Activated CD4-positive, alpha-beta T cell treated with anti-CD3 and anti-CD28 coated beads for 36 hours (primary cell): ENCODE measurements at regions of chr16 and their contacts with region 1.

Region 1: GRCh38 chr16:8963825-8964441 is at the start of gene USP7:
- DNase-seq: peak; percentile 97
- ATAC-seq: peak; percentile 91
- H3K4me3 Mint-ChIP-seq: peak within 1 kb of the TSS; percentile 95
- H3K27ac Mint-ChIP-seq: peak within 1 kb of the TSS; percentile 94
- H3K4me1 Mint-ChIP-seq: peaks cover 34% of the 10 kb centered on the region
- H3K27me3 Mint-ChIP-seq: peaks cover 2% of the 10 kb centered on the region
- total RNA-seq, gene USP7: 165 to 198 TPM

Region 2: GRCh38 chr16:8674413-8675022 is 289.4 kb before region 1 on chr16 and contains the start of gene ABAT:
- CTCF ChIA-PET with region 1: no interaction called
- POLR2A ChIA-PET with region 1: no interaction called
- intact Hi-C with region 1: loop called in 1 of 2 experiments (anchors 2 kb)
- DNase-seq: peak; percentile 93
- ATAC-seq: peak; percentile 96
- H3K4me3 Mint-ChIP-seq: peak within 1 kb of the TSS; percentile 83
- H3K27ac Mint-ChIP-seq: peak within 1 kb of the TSS; percentile 92
- H3K4me1 Mint-ChIP-seq: peaks cover 18% of the 10 kb centered on the region
- H3K27me3 Mint-ChIP-seq: no peaks in the 10 kb centered on the region
- total RNA-seq, gene ABAT: 5.4 to 6.0 TPM

Region 3: GRCh38 chr16:8928467-8928957 is 35.4 kb before region 1 on chr16:
- CTCF ChIA-PET with region 1: no interaction called
- POLR2A ChIA-PET with region 1: no interaction called
- intact Hi-C with region 1: loop called in 1 of 2 experiments (anchors 5 kb)
- DNase-seq: peak; percentile 66
- ATAC-seq: peak; percentile 84
- H3K4me3 Mint-ChIP-seq: no peak overlapping the region
- H3K27ac Mint-ChIP-seq: peak overlapping the region; percentile 61
- H3K4me1 Mint-ChIP-seq: peaks cover 62% of the 10 kb centered on the region
- H3K27me3 Mint-ChIP-seq: no peaks in the 10 kb centered on the region

Region 4: DNA sequence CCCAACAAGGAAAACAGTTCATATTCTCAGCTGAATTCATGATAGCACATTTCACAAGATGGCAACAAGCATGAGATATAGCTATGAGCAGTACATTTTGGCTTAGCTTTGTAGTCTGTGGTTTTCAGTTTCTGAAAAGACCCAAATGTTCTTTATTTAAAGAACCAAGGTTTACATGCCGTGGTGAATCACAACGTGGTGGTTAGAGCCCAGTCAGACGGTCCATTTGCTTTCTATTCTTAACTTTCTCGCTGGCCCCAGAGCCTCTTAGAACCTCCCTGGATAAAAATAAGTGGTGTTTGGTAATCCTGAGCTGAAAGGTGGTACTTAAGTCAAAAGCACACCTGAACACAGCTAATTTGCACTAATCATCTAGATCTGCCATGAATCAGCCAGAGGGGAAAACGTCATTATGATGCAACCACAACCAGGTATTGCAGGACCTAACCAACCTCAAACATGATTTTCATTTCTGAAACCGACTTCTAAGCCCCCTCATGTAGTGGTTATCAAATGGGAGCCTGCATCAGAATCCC is 108.9 kb after region 1 on chr16:
- CTCF ChIA-PET with region 1: no interaction called
- POLR2A ChIA-PET with region 1: no interaction called
- intact Hi-C with region 1: loop called in 1 of 2 experiments (anchors 5 kb)
- DNase-seq: peak; percentile 72
- ATAC-seq: peak; percentile 69
- H3K4me3 Mint-ChIP-seq: peak overlapping the region; percentile 41
- H3K27ac Mint-ChIP-seq: peak overlapping the region; percentile 95
- H3K4me1 Mint-ChIP-seq: peaks cover 51% of the 10 kb centered on the region
- H3K27me3 Mint-ChIP-seq: no peaks in the 10 kb centered on the region

Region 5: GRCh38 chr16:9124908-9125584 is 161.1 kb after region 1 on chr16:
- CTCF ChIA-PET with region 1: no interaction called
- POLR2A ChIA-PET with region 1: no interaction called
- intact Hi-C with region 1: loop called in 1 of 2 experiments (anchors 5 kb)
- DNase-seq: no peak
- ATAC-seq: no peak
- H3K4me3 Mint-ChIP-seq: no peak overlapping the region
- H3K27ac Mint-ChIP-seq: peak overlapping the region; percentile 55
- H3K4me1 Mint-ChIP-seq: peaks cover 66% of the 10 kb centered on the region
- H3K27me3 Mint-ChIP-seq: no peaks in the 10 kb centered on the region

Region 6: GRCh38 chr16:9159839-9160550 is 196.1 kb after region 1 on chr16:
- CTCF ChIA-PET with region 1: no interaction called
- POLR2A ChIA-PET with region 1: no interaction called
- intact Hi-C with region 1: no loop called
- DNase-seq: peak; percentile 70
- ATAC-seq: peak; percentile 53
- H3K4me3 Mint-ChIP-seq: no peak overlapping the region
- H3K27ac Mint-ChIP-seq: no peak overlapping the region
- H3K4me1 Mint-ChIP-seq: no peaks in the 10 kb centered on the region
- H3K27me3 Mint-ChIP-seq: peaks cover 18% of the 10 kb centered on the region